ENCODE measurements at regions of chr16 and their contacts with region 1.

Region 1: DNA sequence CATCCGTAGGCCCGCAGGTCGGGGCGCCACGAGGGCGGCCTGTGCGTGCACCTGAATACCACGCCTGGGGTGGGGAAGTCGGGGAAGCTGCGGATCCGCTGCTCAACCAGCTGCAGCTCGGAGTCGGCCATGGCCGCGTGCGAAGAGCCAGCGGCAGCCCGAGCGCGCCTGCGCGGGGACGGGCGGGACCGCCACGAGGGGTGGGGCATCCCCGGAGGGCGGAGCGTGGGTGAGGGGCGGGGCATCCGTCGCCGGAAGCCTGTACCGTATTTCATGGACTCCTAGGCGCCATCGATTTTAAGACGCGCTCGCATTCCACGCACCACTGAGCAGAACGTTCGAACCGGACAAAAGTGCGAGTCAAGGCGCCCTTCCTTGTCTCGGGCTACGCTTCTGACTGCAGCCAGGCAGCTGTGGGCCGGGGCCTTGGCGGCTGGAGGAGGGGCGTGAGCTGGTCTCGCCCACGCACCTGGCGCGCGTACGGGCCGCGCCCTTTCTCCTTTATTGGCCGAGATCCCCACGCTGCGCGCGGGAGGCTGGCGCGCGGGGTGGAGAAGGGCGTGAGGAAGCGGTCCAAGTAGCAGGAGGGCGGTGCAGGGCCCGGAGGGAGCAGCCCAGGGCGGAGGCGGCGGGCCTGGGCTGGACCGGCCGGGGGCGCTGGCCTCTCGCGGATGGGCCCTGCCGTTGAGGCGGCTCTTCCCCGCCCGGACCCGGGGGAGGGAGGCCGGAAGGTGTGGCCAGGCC is at the start of gene APRT:
- DNase-seq: peak; percentile 99
- H3K4me3 Mint-ChIP-seq: peak within 1 kb of the TSS; percentile 97
- H3K27ac Mint-ChIP-seq: peak within 1 kb of the TSS; percentile 97
- H3K4me1 Mint-ChIP-seq: peaks cover 12% of the 10 kb centered on the region
- H3K27me3 Mint-ChIP-seq: no peaks in the 10 kb centered on the region
- CTCF ChIP-seq: no peak
- total RNA-seq, gene APRT: 203 and 207 TPM in 2 replicates

Region 2: DNA sequence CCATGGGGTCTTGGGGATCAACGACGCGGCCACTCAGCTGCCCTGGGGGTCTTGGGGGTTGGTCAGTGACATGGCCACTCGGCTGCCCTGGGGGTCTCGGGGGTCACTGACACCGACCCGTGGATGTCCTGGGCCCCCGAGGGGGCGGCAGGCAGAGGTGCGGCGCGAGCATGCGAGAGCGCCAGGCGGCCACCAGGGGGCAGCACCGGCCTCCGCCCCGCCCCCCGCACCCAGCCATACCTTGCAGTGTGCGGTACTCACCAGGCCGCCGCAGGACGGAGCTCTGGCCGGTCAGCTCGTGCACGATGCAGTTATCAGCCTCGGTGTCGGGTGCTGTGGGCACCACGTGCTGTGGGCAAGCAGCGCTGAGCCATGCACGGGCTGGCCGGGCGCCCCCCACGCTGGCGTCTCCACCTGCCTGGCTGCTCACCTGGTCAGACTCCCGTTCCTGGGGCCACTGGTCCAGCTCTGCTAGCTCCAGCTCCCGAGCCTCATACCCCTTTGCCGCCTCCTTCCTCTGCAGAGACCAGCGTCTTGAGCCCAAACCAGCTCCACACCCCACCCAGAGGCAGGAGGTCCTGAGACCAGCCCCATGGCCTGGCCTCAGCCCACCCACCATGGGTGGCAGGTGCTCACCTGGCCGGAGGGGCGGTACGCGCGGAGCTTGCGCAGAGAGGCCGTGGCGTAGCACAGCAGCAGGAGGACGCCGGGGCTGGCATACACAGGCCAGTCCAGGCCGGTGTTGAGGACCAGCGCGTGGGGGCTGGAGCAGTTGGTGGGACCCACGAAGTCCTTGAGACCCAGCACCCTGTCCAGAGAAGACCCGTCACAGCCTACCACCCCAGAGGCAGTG is 74.4 kb before region 1 on chr16:
- CTCF ChIA-PET with region 1: interaction called, 16 read pairs
- intact Hi-C with region 1: no loop called
- DNase-seq: peak; percentile 75
- H3K4me3 Mint-ChIP-seq: no peak overlapping the region
- H3K27ac Mint-ChIP-seq: no peak overlapping the region
- H3K4me1 Mint-ChIP-seq: no peaks in the 10 kb centered on the region
- H3K27me3 Mint-ChIP-seq: no peaks in the 10 kb centered on the region
- CTCF ChIP-seq: peak; percentile 99

Region 3: GRCh38 chr16:88856828-88857733 is 45.1 kb after region 1 on chr16 and contains the starts of genes GALNS and TRAPPC2L:
- CTCF ChIA-PET with region 1: interaction called, 15 read pairs
- intact Hi-C with region 1: no loop called
- DNase-seq: peak; percentile 100
- H3K4me3 Mint-ChIP-seq: peak within 1 kb of the TSS; percentile 89
- H3K27ac Mint-ChIP-seq: peak within 1 kb of the TSS; percentile 97
- H3K4me1 Mint-ChIP-seq: peaks cover 17% of the 10 kb centered on the region
- H3K27me3 Mint-ChIP-seq: no peaks in the 10 kb centered on the region
- CTCF ChIP-seq: no peak
- total RNA-seq, gene GALNS: 50.4 and 55.0 TPM in 2 replicates
- total RNA-seq, gene TRAPPC2L: 79.1 and 110 TPM in 2 replicates

Region 4: DNA sequence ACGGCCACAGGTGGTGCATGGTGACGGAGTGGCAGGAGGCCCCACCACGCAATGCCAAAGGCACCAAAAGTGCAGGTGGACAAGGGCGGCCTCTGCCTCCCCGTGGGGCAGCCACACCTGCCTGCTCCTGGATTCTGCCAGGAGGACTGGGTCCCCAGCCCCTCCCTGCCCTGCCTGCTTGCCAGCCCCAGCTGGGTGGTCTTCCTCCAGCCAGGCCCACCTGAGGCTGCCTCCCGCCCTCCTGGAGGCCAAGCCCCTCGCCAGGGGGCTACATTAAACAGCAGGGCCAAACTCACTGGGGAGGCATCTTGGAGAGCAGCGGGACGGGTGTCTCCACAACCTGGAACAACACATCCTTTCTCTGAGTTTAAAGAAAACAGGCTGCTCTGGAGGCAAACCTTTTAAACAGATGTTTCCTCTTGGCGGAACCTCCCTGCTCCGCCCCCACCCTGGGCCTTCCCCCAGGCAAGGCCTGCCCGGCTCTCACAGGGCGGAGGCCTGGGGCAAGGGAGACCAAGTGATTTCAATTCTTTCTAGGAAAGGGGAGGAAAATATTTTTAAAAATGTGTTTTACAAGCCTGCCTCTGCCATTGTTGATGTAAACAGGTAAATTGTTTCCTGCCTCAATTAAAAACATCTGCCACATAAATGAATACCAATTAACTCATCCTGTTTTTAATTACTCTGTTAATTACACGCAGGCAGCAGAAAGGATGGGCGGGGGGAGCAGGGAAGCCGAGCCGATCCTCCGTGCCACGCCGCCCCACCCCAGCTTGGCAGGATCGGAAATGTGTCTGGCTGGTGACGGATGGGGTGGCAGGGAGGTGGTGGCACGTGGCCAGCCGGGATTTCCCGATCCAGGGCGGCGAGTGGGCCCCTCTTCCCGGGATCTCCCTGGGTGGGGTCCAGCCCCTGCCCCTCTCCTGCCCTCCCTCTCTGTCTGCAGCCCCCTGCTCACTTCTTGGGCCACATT is 109.0 kb after region 1 on chr16:
- CTCF ChIA-PET with region 1: no interaction called
- intact Hi-C with region 1: no loop called
- DNase-seq: peak; percentile 73
- H3K4me3 Mint-ChIP-seq: peak overlapping the region; percentile 40
- H3K27ac Mint-ChIP-seq: peak overlapping the region; percentile 52
- H3K4me1 Mint-ChIP-seq: peaks cover 16% of the 10 kb centered on the region
- H3K27me3 Mint-ChIP-seq: peaks cover 19% of the 10 kb centered on the region
- CTCF ChIP-seq: no peak

Region 5: GRCh38 chr16:89037261-89038152 is 225.6 kb after region 1 on chr16:
- CTCF ChIA-PET with region 1: no interaction called
- intact Hi-C with region 1: no loop called
- DNase-seq: peak; percentile 65
- H3K4me3 Mint-ChIP-seq: no peak overlapping the region
- H3K27ac Mint-ChIP-seq: no peak overlapping the region
- H3K4me1 Mint-ChIP-seq: peaks cover 3% of the 10 kb centered on the region
- H3K27me3 Mint-ChIP-seq: peaks cover 90% of the 10 kb centered on the region
- CTCF ChIP-seq: no peak

Region 6: GRCh38 chr16:89171463-89172170 is 359.7 kb after region 1 on chr16 and contains the start of gene CDH15:
- CTCF ChIA-PET with region 1: interaction called, 4 read pairs
- intact Hi-C with region 1: loop called (anchors 2 kb)
- DNase-seq: peak; percentile 99
- H3K4me3 Mint-ChIP-seq: peak within 1 kb of the TSS; percentile 71
- H3K27ac Mint-ChIP-seq: peak within 1 kb of the TSS; percentile 48
- H3K4me1 Mint-ChIP-seq: peaks cover 10% of the 10 kb centered on the region
- H3K27me3 Mint-ChIP-seq: peaks cover 68% of the 10 kb centered on the region
- CTCF ChIP-seq: no peak
- total RNA-seq, gene CDH15: not detected in 2 replicates

Region 7: GRCh38 chr16:89217388-89218191 is 405.6 kb after region 1 on chr16 and contains the start of gene ZNF778:
- CTCF ChIA-PET with region 1: no interaction called
- intact Hi-C with region 1: loop called (anchors 5 kb)
- DNase-seq: peak; percentile 85
- H3K4me3 Mint-ChIP-seq: peak within 1 kb of the TSS; percentile 98
- H3K27ac Mint-ChIP-seq: peak within 1 kb of the TSS; percentile 87
- H3K4me1 Mint-ChIP-seq: peaks cover 17% of the 10 kb centered on the region
- H3K27me3 Mint-ChIP-seq: no peaks in the 10 kb centered on the region
- CTCF ChIP-seq: no peak
- total RNA-seq, gene ZNF778: 15.3 and 16.6 TPM in 2 replicates